ENCODE measurements at regions of chr6 and their contacts with region 1.

Region 1: GRCh38 chr6:6351511-6352025 is 31.1 kb upstream of the F13A1 start:
- DNase-seq: no peak
- ATAC-seq: no peak
- H3K4me3 Mint-ChIP-seq: no peak overlapping the region
- H3K27ac Mint-ChIP-seq: no peak overlapping the region
- H3K4me1 Mint-ChIP-seq: no peaks in the 10 kb centered on the region
- H3K27me3 Mint-ChIP-seq: peaks cover 25% of the 10 kb centered on the region
- CTCF ChIP-seq: no peak

Region 2: DNA sequence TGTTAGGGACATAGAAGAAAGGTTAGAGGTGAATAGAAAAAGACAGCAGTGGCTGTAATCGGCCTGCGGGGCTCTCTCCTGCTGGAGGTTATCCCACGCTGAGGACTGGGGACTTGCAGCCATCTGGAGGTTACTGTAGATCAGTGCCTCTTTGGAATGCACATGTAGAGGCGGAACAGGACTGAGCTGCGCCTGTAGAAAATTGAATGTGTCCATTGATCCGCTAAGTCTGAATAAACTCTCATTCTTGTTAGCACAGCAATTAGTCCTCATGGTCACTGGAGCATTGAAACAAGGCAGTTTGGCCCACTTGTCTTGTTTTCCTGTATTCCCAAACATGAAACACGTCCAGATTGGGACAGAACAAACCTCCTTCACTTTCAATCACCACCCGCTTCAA is 15.2 kb after region 1 on chr6:
- CTCF ChIA-PET with region 1: no interaction called
- POLR2A ChIA-PET with region 1: no interaction called
- intact Hi-C with region 1: loop called (anchors 2 kb)
- DNase-seq: no peak
- ATAC-seq: no peak
- H3K4me3 Mint-ChIP-seq: no peak overlapping the region
- H3K27ac Mint-ChIP-seq: no peak overlapping the region
- H3K4me1 Mint-ChIP-seq: no peaks in the 10 kb centered on the region
- H3K27me3 Mint-ChIP-seq: no peaks in the 10 kb centered on the region
- CTCF ChIP-seq: no peak

Measured in activated B cell treated with CpG ODN at 0.5 μM for 24 hours (primary cell).